Stomach (tissue), 19 donors: ENCODE measurements at regions of chrX and their contacts with region 1.

Region 1: DNA sequence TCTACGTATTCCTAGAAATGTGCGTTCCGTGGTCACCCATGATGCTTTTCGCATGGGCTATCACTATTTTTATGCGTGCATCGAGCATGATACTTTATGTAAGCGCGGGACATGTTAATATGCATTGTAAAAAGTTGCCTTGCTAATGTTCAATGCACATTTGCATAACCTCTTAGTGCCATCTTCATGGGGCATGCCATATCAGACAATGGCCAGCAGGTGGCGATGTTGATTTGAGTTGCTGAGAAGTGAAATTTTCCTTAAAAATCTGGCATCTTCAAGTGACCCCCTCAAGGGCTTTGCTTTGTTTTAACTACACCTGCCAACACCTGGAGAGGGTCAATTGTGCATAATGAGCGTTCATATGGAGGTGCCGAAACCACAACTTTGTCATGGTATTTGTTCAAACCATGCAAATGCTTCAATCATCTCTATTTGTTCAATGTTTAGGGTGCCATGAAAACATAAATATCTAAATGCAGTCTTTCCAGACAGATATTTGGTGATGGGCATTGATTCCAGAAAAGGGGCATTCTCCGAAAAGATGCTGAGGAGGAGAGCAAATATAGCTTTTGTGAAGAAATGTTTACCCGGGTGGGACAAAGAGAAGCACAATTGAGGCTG is 833.9 kb upstream of the PRKX start:
- DNase-seq: peak; percentile 65 to 76
- H3K4me3 ChIP-seq: no peak overlapping the region
- H3K27ac ChIP-seq: no peak overlapping the region
- H3K4me1 ChIP-seq: no peaks in the 10 kb centered on the region
- H3K27me3 ChIP-seq: no peaks in the 10 kb centered on the region
- CTCF ChIP-seq: peak in 5 of 7 experiments; percentile 49 to 94 (median 85)
- EP300 ChIP-seq: no peak
- POLR2A ChIP-seq: no peak

Region 2: DNA sequence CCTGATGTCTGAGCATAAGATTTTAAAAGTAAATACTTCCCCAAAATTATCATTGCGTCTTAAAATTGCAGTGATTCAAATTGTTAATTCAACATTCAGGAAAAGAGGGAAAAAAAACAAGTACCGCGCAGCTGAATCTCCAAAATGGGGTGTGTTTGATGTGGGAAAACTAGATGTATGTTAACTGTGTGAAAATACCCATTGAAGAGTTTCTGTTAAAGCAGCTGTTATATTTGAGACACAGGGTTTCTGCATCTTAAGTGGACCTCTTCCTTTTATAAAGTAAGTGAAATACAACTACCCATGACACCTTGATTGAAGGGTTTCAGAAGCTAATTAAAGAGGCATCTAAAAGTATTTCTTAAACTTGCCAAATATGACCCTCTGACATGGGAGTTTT is 495.2 kb after region 1 on chrX:
- intact Hi-C with region 1: no loop called
- DNase-seq: no peak
- H3K4me3 ChIP-seq: no peak overlapping the region
- H3K27ac ChIP-seq: no peak overlapping the region
- H3K4me1 ChIP-seq: no peaks in the 10 kb centered on the region
- H3K27me3 ChIP-seq: no peaks in the 10 kb centered on the region
- CTCF ChIP-seq: no peak
- EP300 ChIP-seq: no peak
- POLR2A ChIP-seq: no peak

Region 3: DNA sequence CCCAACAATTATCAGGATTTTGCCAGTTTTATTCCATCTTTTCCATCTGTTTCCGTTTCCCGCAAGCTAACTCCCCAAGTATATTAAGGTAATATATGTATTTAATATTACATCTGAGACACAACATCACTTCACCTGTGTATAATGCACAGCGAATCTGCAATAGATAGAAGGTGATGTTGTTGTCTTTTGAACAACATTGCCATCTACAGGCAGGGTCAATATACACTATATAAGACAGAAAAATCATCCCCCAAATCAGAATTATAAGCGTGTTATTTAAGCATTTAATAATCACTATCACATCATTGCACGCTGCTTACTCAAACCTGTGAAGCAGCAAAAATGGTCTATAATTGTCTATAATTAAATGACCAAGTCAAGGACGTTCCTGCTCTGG is 565.8 kb after region 1 on chrX:
- intact Hi-C with region 1: loop called (anchors 5 kb)
- DNase-seq: peak in 1 of 2 donors; percentile 28
- H3K4me3 ChIP-seq: no peak overlapping the region
- H3K27ac ChIP-seq: no peak overlapping the region
- H3K4me1 ChIP-seq: no peaks in the 10 kb centered on the region
- H3K27me3 ChIP-seq: no peaks in the 10 kb centered on the region
- CTCF ChIP-seq: peak in 1 of 7 experiments; percentile 8
- EP300 ChIP-seq: no peak
- POLR2A ChIP-seq: no peak